Dendritic cell treated with granulocyte-macrophage colony-stimulating factor and Interleukin-4, amounts not matched to agents 40 ng/mL and 50 ng/mL, for 4 days (primary cell): ENCODE measurements at regions of chr10 and their contacts with region 1.

Region 1: GRCh38 chr10:123154092-123154921 is at the start of gene BUB3:
- H3K4me3 Mint-ChIP-seq: peak within 1 kb of the TSS; percentile 96
- H3K27ac Mint-ChIP-seq: peak within 1 kb of the TSS; percentile 95
- H3K4me1 Mint-ChIP-seq: peaks cover 45% of the 10 kb centered on the region
- H3K27me3 Mint-ChIP-seq: peaks cover 40% of the 10 kb centered on the region

Region 2: DNA sequence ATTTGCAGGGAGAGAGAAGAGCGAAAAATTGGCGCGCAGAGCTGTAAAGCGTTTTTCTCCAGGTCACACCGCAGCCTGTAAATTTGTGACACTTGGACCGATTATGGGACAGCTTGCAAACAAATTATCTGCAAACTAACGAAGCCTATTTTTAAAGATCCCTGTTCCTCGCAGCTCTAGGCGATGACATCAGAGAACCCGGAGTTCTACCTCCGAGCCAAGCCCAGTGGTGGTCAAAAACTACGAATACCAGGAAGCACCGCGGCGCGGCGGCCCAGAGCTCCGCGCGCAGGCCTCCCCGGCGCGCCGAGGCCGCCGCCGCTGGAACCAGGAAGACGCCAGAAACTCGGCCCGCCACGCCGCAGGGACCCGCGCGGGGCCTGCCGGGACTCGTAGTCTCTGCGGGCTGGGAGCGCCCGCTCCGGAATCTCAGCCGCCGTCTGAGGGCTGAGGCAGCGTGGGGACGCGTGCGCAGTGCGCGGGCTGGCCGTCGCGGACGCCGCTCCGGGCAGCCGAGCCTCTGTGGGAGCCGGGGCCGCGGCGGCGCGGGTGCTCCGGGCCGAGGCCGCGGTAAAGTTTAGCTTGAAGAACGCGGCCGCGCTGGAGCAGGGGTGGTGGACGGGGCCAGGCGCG is 780.0 kb before region 1 on chr10 and contains the start of gene PLEKHA1:
- intact Hi-C with region 1: loop called (anchors 5 kb)
- H3K4me3 Mint-ChIP-seq: peak within 1 kb of the TSS; percentile 93
- H3K27ac Mint-ChIP-seq: peak within 1 kb of the TSS; percentile 84
- H3K4me1 Mint-ChIP-seq: peaks cover 9% of the 10 kb centered on the region
- H3K27me3 Mint-ChIP-seq: peaks cover 55% of the 10 kb centered on the region

Region 3: GRCh38 chr10:123008439-123009205 is 145.7 kb before region 1 on chr10 and contains the starts of genes ACADSB and IKZF5:
- intact Hi-C with region 1: loop called (anchors 2 kb)
- H3K4me3 Mint-ChIP-seq: peak within 1 kb of the TSS; percentile 100
- H3K27ac Mint-ChIP-seq: peak within 1 kb of the TSS; percentile 99
- H3K4me1 Mint-ChIP-seq: peaks cover 32% of the 10 kb centered on the region
- H3K27me3 Mint-ChIP-seq: peaks cover 3% of the 10 kb centered on the region